ENCODE measurements at regions of chr1 and their contacts with region 1.

Region 1: GRCh38 chr1:37989361-37989930 is 376 bp downstream of the SF3A3 start:
- DNase-seq: peak; percentile 47
- ATAC-seq: peak; percentile 51
- H3K4me3 ChIP-seq: peak overlapping the region; percentile 93
- H3K27ac ChIP-seq: peak overlapping the region; percentile 9; the same call in 1 of the 2 replicates
- H3K4me1 ChIP-seq: peaks cover 7% of the 10 kb centered on the region; the same call in 1 of the 2 replicates
- H3K27me3 ChIP-seq: no peaks in the 10 kb centered on the region
- CTCF ChIP-seq: no peak

Region 2: DNA sequence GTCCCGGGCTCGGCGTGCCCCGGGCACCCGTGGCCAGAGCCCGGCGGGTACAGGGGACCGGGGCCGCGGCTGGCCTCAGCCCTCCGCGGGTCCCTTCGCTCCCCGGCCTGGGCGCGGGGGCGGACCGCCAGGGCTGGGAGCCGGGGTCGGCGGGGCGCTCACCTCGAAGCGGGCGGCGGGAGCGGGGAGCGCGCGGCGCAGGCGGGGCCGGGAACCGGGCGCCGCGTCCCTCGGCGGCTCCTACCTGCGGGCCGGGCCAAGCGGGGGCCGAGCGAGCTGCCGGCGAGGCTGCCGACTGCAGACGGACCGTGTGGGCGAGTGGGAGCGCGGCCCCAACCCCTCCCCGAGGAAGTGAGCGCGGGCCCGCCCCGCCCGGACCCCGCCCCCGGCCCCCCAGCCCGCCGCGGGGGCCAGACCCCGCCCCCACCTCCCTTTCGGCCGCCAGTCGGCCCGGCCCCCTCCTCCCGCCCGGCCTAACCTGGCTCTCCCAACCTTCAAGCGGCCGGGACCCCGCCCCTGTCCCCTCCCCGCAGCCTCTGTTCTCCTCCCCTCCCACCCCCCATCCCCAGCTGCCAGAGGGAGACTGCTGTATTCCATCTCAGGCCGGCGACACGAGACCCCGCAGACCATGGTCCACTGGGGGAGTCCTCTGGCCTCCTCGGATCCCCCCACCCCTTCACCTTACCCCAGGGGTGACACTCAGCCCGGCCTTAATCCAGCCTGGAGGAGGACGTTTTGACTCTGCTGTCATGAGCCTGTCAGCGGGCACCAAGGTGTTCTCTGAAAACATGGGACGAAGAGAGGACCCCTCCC is 16.0 kb after region 1 on chr1 and contains the start of gene FHL3:
- CTCF ChIA-PET with region 1: no interaction called
- POLR2A ChIA-PET with region 1: no interaction called
- intact Hi-C with region 1: loop called (anchors 1 kb)
- DNase-seq: peak; percentile 59
- ATAC-seq: peak; percentile 76
- H3K4me3 ChIP-seq: peak within 1 kb of the TSS; percentile 75
- H3K27ac ChIP-seq: no peak within 1 kb of the TSS
- H3K4me1 ChIP-seq: peaks cover 19% of the 10 kb centered on the region
- H3K27me3 ChIP-seq: no peaks in the 10 kb centered on the region
- CTCF ChIP-seq: no peak
- total RNA-seq, gene FHL3: 3.6 and 6.3 TPM in 2 replicates

Region 3: GRCh38 chr1:38012363-38013226 is 23.1 kb after region 1 on chr1 and contains the start of gene UTP11:
- CTCF ChIA-PET with region 1: no interaction called
- POLR2A ChIA-PET with region 1: no interaction called
- intact Hi-C with region 1: loop called (anchors 1 kb)
- DNase-seq: peak; percentile 99
- ATAC-seq: peak; percentile 98
- H3K4me3 ChIP-seq: peak within 1 kb of the TSS; percentile 90
- H3K27ac ChIP-seq: peak within 1 kb of the TSS; percentile 76
- H3K4me1 ChIP-seq: peaks cover 6% of the 10 kb centered on the region
- H3K27me3 ChIP-seq: no peaks in the 10 kb centered on the region
- CTCF ChIP-seq: no peak
- total RNA-seq, gene UTP11: 33.8 and 48.1 TPM in 2 replicates

Region 4: DNA sequence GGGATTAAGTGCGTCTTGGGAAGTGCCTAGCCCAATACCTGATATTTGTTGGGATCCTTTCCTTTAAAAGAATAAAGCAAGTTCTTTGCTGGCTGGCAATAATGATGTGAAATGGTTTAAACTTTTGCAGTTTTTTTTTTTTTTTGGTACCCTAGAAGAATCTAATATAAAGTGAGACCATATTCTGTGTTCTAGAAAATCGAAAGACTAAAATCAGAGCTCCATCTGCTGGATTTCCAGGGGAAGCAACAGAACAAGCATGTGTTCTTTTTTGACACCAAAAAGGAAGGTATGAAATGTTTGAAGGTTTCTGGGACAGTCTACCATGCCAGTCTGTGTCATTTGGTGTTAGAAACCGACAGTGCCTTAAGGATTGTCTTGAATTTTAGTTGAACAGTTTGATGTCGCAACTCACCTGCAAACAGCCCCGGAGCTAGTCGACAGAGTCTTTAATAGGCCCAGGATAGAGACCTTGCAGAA is 29.5 kb after region 1 on chr1:
- CTCF ChIA-PET with region 1: interaction called, 12 read pairs
- POLR2A ChIA-PET with region 1: no interaction called
- intact Hi-C with region 1: no loop called
- DNase-seq: peak; percentile 42
- ATAC-seq: peak; percentile 37; the same call in 1 of the 2 replicates
- H3K4me3 ChIP-seq: no peak overlapping the region
- H3K27ac ChIP-seq: no peak overlapping the region
- H3K4me1 ChIP-seq: peaks cover 3% of the 10 kb centered on the region
- H3K27me3 ChIP-seq: no peaks in the 10 kb centered on the region
- CTCF ChIP-seq: peak; percentile 74

Measured in PC-3 (cell line).